ENCODE measurements at regions of chr10 and their contacts with region 1.

Region 1: GRCh38 chr10:30433730-30434272 is at the start of gene MAP3K8:
- DNase-seq: peak; percentile 96
- H3K4me3 Mint-ChIP-seq: peak within 1 kb of the TSS; percentile 94
- H3K27ac Mint-ChIP-seq: peak within 1 kb of the TSS; percentile 82
- H3K4me1 Mint-ChIP-seq: peaks cover 55% of the 10 kb centered on the region
- H3K27me3 Mint-ChIP-seq: no peaks in the 10 kb centered on the region
- total RNA-seq, gene MAP3K8: 20.9 and 22.0 TPM in 2 replicates

Region 2: DNA sequence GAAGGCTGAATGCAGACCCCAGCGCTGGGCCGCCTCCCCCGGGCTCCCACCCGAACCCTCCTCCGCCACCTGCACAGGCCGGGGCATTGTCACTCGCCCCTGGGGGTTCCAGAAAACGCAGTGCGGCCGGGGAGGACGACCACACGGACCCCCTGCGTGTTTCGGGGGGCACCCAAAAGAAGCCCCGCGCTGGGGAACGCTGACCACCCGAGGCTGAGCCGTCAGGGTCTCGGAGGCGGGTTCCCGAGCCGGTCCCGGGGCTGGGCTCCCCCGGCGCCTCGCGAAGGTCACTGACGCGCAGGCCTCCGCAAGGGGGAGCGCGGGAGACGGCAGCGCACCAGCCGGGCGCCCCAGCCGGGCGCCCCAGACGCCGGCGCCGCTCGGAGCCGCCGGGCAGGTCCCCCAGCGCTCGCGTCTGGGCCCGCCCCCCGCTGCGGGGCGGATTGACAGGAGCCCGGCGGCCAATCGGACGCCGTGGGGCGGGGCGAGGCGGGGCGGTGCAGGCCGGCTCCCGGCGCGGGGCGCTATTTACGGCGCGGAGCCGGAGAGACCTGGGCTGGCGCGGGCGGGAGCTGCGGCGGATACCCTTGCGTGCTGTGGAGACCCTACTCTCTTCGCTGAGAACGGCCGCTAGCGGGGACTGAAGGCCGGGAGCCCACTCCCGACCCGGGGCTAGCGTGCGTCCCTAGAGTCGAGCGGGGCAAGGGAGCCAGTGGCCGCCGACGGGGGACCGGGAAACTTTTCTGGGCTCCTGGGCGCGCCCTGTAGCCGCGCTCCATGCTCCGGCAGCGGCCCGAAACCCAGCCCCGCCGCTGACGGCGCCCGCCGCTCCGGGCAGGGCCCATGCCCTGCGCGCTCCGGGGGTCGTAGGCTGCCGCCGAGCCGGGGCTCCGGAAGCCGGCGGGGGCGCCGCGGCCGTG is 1756.6 kb before region 1 on chr10 and contains the start of gene BAMBI:
- intact Hi-C with region 1: loop called (anchors 10 kb)
- DNase-seq: peak; percentile 97
- H3K4me3 Mint-ChIP-seq: peak within 1 kb of the TSS; percentile 75
- H3K27ac Mint-ChIP-seq: peak within 1 kb of the TSS; percentile 30
- H3K4me1 Mint-ChIP-seq: peaks cover 19% of the 10 kb centered on the region
- H3K27me3 Mint-ChIP-seq: peaks cover 72% of the 10 kb centered on the region
- total RNA-seq, gene BAMBI: 0.31 and 0.44 TPM in 2 replicates

Region 3: DNA sequence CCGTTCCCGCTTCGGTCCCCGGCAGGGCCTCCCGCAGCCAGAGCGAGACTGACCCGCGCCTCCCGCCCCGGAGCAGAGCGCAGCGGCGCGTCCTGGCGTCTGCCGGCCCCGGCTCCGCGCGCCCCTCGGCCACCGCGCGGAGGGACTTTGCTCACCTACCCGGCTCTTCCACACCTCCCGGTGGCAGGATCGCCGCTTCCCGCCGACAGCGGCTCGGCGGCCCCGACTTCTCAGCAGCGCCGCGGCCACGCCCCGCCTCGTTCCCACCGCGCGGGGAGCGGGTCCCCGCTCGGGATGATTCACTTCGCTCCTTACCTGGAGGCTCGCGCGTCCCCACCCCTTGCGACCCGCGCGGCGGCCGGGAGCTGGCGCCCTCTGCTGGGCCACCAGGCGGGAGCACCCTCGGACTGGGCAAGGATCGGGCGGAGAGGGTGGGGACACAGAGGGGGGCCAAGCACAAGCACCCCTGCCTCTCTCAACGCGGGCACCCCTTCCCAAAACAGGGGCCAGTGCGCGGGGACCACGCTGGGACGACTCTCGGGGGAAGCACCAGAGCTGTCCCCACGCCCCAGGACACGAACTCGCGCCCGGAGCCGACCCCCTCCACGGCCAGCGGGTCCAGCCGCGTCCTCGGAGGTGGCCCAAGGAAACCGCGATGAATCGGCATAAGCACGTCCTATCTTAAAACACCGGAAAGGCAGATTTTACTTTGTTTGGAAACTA is 698.0 kb before region 1 on chr10:
- intact Hi-C with region 1: loop called (anchors 10 kb)
- DNase-seq: peak; percentile 95
- H3K4me3 Mint-ChIP-seq: peak overlapping the region; percentile 85
- H3K27ac Mint-ChIP-seq: peak overlapping the region; percentile 85
- H3K4me1 Mint-ChIP-seq: peaks cover 11% of the 10 kb centered on the region
- H3K27me3 Mint-ChIP-seq: peaks cover 39% of the 10 kb centered on the region

Region 4: GRCh38 chr10:30348378-30348776 is 85.4 kb before region 1 on chr10:
- intact Hi-C with region 1: no loop called
- DNase-seq: no peak
- H3K4me3 Mint-ChIP-seq: peak overlapping the region; percentile 90
- H3K27ac Mint-ChIP-seq: peak overlapping the region; percentile 93
- H3K4me1 Mint-ChIP-seq: peaks cover 34% of the 10 kb centered on the region
- H3K27me3 Mint-ChIP-seq: peaks cover under 1% of the 10 kb centered on the region

Region 5: GRCh38 chr10:30413996-30414576 is 19.7 kb before region 1 on chr10:
- intact Hi-C with region 1: loop called (anchors 1 kb)
- DNase-seq: peak; percentile 83
- H3K4me3 Mint-ChIP-seq: no peak overlapping the region
- H3K27ac Mint-ChIP-seq: no peak overlapping the region
- H3K4me1 Mint-ChIP-seq: peaks cover 25% of the 10 kb centered on the region
- H3K27me3 Mint-ChIP-seq: no peaks in the 10 kb centered on the region

Region 6: GRCh38 chr10:30529373-30529998 is 95.7 kb after region 1 on chr10:
- intact Hi-C with region 1: loop called (anchors 1 kb)
- DNase-seq: peak; percentile 94
- H3K4me3 Mint-ChIP-seq: peak overlapping the region; percentile 78
- H3K27ac Mint-ChIP-seq: peak overlapping the region; percentile 90
- H3K4me1 Mint-ChIP-seq: peaks cover 66% of the 10 kb centered on the region
- H3K27me3 Mint-ChIP-seq: no peaks in the 10 kb centered on the region

Region 7: DNA sequence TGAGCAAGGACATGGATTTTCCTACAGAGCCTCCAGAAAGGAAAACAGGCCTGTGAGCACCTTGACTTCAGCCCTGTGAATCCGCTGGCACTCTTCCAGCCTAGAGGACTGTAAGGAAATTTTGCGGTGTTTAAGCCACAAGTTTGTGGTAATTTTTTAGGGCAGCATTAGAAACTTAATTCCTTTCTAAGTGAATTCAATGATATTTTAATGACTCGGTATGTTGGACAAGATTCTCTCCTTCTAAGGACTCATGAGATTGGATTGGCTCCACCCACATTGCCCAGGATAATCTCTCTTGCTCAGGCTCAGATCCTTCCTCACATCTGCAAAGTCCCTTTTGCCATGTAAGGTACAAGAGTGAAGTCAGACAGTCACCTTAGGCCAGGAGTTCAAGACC is 191.3 kb after region 1 on chr10:
- intact Hi-C with region 1: no loop called
- DNase-seq: no peak
- H3K4me3 Mint-ChIP-seq: no peak overlapping the region
- H3K27ac Mint-ChIP-seq: no peak overlapping the region
- H3K4me1 Mint-ChIP-seq: no peaks in the 10 kb centered on the region
- H3K27me3 Mint-ChIP-seq: peaks cover 29% of the 10 kb centered on the region

Region 8: DNA sequence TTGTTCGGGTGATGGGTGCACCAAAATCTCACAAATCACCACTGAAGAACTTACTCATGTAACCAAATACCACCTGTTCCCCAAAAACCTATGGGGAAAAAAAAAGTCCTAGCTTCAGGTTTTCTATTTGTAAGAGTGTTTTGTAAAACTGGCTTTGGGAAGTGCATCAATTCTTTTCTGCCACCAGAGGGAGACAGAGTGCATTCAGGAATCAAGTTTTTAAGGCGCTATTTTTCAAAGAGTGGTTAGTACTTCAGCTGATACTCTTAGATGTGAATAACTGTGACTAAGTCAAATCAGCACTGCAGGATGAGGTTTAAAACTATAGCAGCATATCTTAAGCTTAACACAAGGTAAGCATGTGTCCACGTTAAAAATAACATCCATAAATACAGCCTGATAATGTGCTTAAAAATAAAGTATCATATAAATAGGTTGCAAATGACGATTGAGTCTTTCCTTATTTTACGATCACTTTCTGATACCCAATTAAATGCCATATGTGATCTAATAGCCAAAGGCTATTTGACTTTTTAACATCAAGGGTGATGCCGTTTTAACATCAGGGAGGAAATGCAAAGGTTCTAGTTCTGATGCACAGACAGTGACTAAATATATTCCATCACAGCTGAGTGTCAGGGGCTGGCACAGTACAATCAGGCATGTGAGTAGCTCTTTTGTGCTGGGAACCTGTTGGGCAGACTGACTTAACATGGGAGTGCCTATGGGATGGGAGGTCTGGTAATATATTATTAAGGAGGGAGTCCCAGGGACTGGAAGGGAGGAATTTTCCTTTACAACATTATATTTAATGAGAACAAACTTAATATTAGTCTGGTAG is 206.4 kb after region 1 on chr10:
- intact Hi-C with region 1: no loop called
- DNase-seq: peak; percentile 75
- H3K4me3 Mint-ChIP-seq: no peak overlapping the region
- H3K27ac Mint-ChIP-seq: no peak overlapping the region
- H3K4me1 Mint-ChIP-seq: peaks cover 6% of the 10 kb centered on the region
- H3K27me3 Mint-ChIP-seq: peaks cover 38% of the 10 kb centered on the region

Region 9: GRCh38 chr10:30701451-30702173 is 267.8 kb after region 1 on chr10:
- intact Hi-C with region 1: loop called (anchors 1 kb)
- DNase-seq: peak; percentile 92
- H3K4me3 Mint-ChIP-seq: peak overlapping the region; percentile 76
- H3K27ac Mint-ChIP-seq: peak overlapping the region; percentile 95
- H3K4me1 Mint-ChIP-seq: peaks cover 78% of the 10 kb centered on the region
- H3K27me3 Mint-ChIP-seq: no peaks in the 10 kb centered on the region

Region 10: DNA sequence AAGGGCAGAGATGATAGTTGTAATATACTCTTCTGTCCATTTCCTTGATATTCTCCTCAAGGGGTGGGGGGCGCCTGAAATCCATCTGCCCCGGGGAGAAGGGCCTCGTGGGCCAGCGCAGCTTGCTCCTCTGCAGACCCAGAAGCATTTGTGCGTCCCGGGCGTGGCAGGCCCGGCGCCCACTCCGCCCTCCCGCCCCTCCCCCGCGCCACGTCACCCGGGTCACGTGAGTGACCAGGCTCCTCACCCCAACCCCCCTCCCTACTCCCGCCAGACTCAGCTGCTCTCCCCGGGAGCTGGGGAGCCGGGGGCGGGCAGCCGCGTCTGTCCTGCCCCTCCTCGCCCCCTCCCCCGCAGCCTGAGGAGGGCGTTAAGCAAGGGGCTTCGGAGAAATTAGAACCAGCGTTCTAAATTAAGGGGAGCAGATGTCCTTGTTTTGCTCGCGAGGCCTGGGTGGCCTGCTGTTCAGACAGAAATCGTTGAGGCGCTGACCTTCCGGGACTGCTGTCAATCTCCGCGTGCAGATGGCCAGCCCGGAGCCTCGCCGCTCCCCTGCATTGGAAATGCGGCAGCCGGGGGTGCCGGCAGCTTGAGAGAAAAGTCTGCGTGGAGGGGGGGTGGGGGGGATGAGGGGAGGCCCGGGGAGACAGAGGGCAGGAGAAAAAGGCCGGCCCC is 700.0 kb after region 1 on chr10:
- intact Hi-C with region 1: loop called (anchors 10 kb)
- DNase-seq: peak; percentile 85
- H3K4me3 Mint-ChIP-seq: peak overlapping the region; percentile 87
- H3K27ac Mint-ChIP-seq: peak overlapping the region; percentile 98
- H3K4me1 Mint-ChIP-seq: peaks cover 43% of the 10 kb centered on the region
- H3K27me3 Mint-ChIP-seq: no peaks in the 10 kb centered on the region